Activated CD4-positive, alpha-beta memory T cell treated with anti-CD3 and anti-CD28 coated beads for 36 hours (primary cell): ENCODE measurements at regions of chr4 and their contacts with region 1.

Region 1: DNA sequence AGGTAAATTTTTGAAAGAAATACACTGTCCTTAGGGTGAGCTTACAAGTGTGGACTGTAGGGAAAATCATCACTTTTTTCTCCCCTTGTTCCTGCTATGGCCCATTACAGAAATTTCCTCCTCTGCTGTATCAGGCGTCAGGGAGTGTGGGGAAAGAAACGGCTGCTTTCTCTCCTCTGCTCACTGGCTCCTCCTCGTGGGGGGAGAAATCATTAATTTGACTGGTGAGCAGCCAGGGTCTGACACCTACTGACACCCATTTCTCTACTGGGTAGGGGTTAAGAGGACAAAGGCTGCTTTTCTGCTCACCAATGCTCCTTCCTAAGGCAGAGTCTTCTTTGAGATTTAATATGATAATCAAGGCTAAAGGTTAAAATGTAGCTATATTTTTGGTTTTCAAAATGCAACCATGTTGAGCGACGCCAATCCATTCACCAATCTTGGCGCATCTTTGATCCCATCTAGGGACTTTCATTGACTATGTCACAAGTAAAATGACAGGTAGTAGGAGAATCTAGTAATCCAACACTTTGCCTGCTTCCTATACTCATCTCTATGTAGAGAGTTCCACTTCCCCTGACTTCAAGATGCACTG is 25.1 kb downstream of the SETD7 start:
- DNase-seq: peak; percentile 61
- H3K4me3 Mint-ChIP-seq: no peak overlapping the region
- H3K27ac Mint-ChIP-seq: no peak overlapping the region
- H3K4me1 Mint-ChIP-seq: peaks cover under 1% of the 10 kb centered on the region
- H3K27me3 Mint-ChIP-seq: no peaks in the 10 kb centered on the region

Region 2: DNA sequence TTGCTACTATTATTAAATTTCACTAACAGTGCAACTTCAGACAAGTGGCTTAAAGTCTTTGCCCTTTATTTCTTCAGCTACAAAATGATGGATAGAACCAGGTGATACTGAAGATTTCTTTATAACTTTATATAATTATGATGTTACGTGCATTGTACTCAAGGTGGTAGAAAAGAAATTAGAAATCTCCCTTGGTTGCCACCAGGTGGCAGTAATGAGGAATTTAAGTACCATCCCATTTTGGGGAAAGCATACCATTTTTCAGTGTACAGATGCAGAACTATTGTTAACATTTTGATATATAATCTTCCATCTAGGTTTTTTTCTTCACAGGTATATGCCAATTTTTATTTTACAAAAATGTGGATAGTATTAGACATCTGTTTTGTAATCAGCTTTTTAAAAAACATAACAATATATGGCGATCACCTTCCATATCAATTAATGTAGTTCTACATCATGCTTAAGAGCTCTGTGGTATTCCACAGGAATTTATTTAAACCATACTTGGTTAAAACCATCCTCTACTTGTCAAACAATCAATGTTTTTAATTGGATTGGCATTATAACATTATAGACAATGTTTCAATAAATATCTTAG is 114.8 kb before region 1 on chr4:
- CTCF ChIA-PET with region 1: interaction called, 3 read pairs
- POLR2A ChIA-PET with region 1: no interaction called
- intact Hi-C with region 1: loop called (anchors 1 kb)
- DNase-seq: no peak
- H3K4me3 Mint-ChIP-seq: no peak overlapping the region
- H3K27ac Mint-ChIP-seq: no peak overlapping the region
- H3K4me1 Mint-ChIP-seq: peaks cover 8% of the 10 kb centered on the region
- H3K27me3 Mint-ChIP-seq: no peaks in the 10 kb centered on the region

Region 3: DNA sequence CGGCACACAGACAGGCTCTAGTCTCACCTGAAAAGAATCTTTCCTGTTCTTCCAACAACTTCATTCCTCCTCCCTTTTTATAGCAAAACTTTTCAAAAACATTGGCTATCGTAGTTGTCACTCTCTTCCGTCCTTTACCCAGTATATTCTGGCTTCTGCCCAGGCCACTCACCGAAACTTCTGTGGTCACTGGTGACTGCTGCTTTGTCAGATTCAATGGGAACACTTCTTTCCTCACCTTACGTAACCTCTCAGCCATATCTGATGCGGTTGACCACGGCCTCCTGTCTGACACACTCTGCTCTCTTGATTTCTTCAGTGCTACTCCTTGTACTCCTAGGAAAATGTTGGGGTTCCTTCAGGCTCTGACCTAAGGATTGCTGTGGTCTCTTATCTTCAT is 1611.5 kb after region 1 on chr4:
- CTCF ChIA-PET with region 1: no interaction called
- POLR2A ChIA-PET with region 1: no interaction called
- intact Hi-C with region 1: no loop called
- DNase-seq: no peak
- H3K4me3 Mint-ChIP-seq: no peak overlapping the region
- H3K27ac Mint-ChIP-seq: no peak overlapping the region
- H3K4me1 Mint-ChIP-seq: no peaks in the 10 kb centered on the region
- H3K27me3 Mint-ChIP-seq: peaks cover 4% of the 10 kb centered on the region